Dorsolateral prefrontal cortex (tissue), 120 donors: ENCODE measurements at regions of chr11 and their contacts with region 1.

Region 1: DNA sequence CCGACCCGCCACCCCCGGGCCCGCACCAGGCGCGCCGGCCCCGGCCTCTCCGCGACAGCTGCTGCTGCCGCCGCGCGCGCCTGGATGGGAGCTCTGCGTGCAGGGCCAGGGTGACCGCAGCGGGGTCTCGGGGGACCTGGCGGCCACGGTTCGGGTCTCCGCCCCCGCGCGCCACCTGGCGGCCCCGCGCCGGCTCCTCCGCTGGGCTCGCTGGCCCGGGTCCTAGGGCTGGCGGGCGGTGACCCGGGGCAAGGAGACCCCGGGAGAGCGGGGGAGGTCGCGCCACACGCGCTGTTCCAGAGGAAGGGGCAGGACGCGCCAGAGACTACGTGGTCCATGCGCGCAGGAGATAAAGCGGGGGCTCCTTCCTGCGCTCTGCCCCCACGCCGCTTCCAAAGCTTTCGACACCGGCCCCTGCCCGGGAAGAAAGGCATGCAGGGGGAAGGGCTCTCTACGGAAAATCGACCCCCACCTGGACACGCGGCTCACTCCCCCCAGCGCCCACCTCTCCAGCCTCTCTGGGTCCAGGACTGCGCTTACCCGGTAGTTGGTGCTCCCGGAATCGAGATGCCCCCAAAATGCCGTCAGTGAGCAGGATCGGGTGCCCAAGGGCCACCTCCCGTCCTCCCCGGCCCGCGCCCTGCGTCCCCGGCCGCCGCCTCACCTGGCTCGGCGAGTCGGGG is 475 bp downstream of the SHANK2 start:
- DNase-seq: peak in 1 of 10 donors; percentile 54
- H3K4me3 ChIP-seq: peak overlapping the region; percentile 16 to 71 (median 52)
- H3K27ac ChIP-seq: peak overlapping the region in 1 of 59 donors; percentile 61
- H3K27me3 ChIP-seq: peaks cover 0 to 59% (median 29%) of the 10 kb centered on the region in 45 donors
- CTCF ChIP-seq: peak in 51 of 56 donors; percentile 13 to 71 (median 43)

Region 2: GRCh38 chr11:71145988-71146824 is 105.7 kb before region 1 on chr11:
- intact Hi-C with region 1: loop called in 1 of 2 experiments (anchors 5 kb)
- DNase-seq: no peak
- H3K4me3 ChIP-seq: no peak overlapping the region
- H3K27ac ChIP-seq: no peak overlapping the region
- H3K27me3 ChIP-seq: peaks cover 0 to 3% (median 0%) of the 10 kb centered on the region in 45 donors
- CTCF ChIP-seq: no peak

Region 3: DNA sequence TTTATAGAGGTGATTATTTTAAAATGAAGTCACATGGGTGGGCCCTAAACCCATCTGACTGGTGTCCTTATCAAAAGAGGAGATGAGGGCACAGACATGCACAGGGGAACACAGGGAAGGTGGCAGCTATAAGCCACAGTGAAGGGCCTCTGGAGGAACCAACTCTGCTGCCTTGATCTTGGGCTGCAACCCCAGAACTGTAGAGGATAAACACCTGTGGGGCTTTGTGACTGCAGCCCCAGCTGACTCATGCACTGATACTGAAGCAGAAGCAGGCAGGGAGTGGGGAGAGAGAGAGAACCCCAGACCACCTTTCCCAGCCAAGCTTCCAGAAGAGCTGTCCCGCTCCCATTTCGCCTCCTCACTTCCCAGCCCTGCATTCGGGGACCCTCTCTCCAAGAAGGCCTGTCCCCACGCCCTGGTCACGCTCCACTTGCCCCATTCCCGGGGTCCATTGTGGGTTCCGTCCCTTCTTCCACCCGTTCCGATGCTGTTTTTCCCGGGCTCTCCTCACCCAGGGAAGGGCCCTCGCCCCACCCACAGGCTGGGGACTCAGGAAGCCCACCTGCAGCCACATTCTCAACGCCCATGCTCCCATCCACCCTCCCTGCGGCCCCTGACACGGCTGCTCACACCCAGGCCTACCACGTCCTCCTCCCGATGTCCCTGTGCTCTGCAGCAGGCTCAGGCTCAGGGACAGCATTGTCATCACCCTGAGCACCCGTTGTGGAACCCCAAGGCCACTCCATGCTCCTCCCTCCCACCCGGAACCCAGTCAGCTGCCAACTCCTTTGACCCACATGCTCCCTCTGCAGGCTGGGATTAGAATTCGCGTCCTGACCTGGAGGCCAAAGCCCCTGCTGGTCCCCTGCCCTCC is 91.3 kb after region 1 on chr11:
- intact Hi-C with region 1: no loop called
- DNase-seq: peak in 3 of 10 donors; percentile 21 to 58 (median 48)
- H3K4me3 ChIP-seq: no peak overlapping the region
- H3K27ac ChIP-seq: no peak overlapping the region
- H3K27me3 ChIP-seq: peaks cover 0 to 5% (median 0%) of the 10 kb centered on the region in 45 donors
- CTCF ChIP-seq: peak in 51 of 56 donors; percentile 15 to 66 (median 41)

Region 4: GRCh38 chr11:71372693-71373657 is 121.1 kb after region 1 on chr11:
- intact Hi-C with region 1: loop called in 1 of 2 experiments (anchors 2 kb)
- DNase-seq: peak in 2 of 10 donors; percentile 27 to 44
- H3K4me3 ChIP-seq: no peak overlapping the region
- H3K27ac ChIP-seq: peak overlapping the region in 13 of 59 donors; percentile 4 to 63 (median 35)
- H3K27me3 ChIP-seq: peaks cover 0 to 2% (median 0%) of the 10 kb centered on the region in 45 donors
- CTCF ChIP-seq: peak in 54 of 56 donors; percentile 36 to 82 (median 60)

Region 5: GRCh38 chr11:71420455-71421241 is 168.7 kb after region 1 on chr11:
- intact Hi-C with region 1: loop called in 1 of 2 experiments (anchors 10 kb)
- DNase-seq: peak in 4 of 10 donors; percentile 11 to 65 (median 50)
- H3K4me3 ChIP-seq: no peak overlapping the region
- H3K27ac ChIP-seq: no peak overlapping the region
- H3K27me3 ChIP-seq: no peaks in the 10 kb centered on the region
- CTCF ChIP-seq: peak; percentile 35 to 84 (median 68)

Region 6: GRCh38 chr11:71962428-71963038 is 710.6 kb after region 1 on chr11:
- intact Hi-C with region 1: no loop called
- DNase-seq: no peak
- H3K4me3 ChIP-seq: no peak overlapping the region
- H3K27ac ChIP-seq: peak overlapping the region in 18 of 59 donors; percentile 0 to 47 (median 29)
- H3K27me3 ChIP-seq: no peaks in the 10 kb centered on the region
- CTCF ChIP-seq: no peak